CD8-positive, alpha-beta memory T cell (primary cell): ENCODE measurements at regions of chr2 and their contacts with region 1.

Region 1: GRCh38 chr2:186641807-186642321 is 52.0 kb upstream of the FAM171B start:
- DNase-seq: peak in 2 of 5 donors; percentile 17 to 30
- H3K4me3 ChIP-seq: no peak overlapping the region
- H3K4me3 Mint-ChIP-seq: no peak overlapping the region
- H3K27ac ChIP-seq: no peak overlapping the region
- H3K27ac Mint-ChIP-seq: no peak overlapping the region
- H3K4me1 ChIP-seq: no peaks in the 10 kb centered on the region
- H3K4me1 Mint-ChIP-seq: peaks cover 0 to 4% (median 0%) of the 10 kb centered on the region in 3 donors
- H3K27me3 ChIP-seq: no peaks in the 10 kb centered on the region
- H3K27me3 Mint-ChIP-seq: no peaks in the 10 kb centered on the region

Region 2: DNA sequence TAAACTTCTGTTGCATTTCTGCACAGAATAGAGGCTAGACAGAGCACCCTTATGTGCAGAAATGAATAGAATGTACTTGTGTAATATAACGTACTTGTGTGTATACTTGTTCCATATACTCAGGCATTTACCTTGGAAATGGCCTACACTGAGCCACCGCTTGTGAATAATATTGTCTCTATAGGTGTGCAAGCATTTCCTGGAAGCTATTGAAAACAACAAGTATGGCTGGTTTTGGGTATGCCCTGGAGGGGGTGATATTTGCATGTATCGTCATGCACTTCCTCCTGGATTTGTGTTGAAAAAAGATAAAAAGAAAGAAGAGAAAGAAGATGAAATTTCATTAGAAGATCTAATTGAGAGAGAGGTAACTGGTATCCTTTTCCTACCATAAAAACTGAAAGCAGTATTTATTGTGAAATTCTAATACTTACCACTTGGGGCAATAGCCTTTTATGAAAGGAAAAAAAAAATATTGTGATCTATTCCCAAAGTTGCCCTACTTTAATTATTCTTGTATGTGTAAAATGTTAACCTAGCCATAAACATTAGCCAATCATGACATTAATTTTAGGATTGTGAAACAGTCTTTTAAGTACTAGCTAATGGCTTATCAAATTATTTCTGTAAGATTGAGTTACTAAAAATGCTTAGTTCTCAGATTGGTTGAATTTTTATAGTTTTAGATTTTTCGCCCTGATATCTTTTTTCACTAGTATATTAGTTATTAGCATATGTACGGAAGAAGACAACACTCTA is 137.8 kb before region 1 on chr2:
- CTCF ChIA-PET with region 1: interaction called, 27 read pairs
- POLR2A ChIA-PET with region 1: no interaction called
- DNase-seq: peak in 2 of 5 donors; percentile 7 to 23
- H3K4me3 ChIP-seq: no peak overlapping the region
- H3K4me3 Mint-ChIP-seq: no peak overlapping the region
- H3K27ac ChIP-seq: no peak overlapping the region
- H3K27ac Mint-ChIP-seq: peak overlapping the region in 4 of 8 donors; percentile 7 to 88 (median 46)
- H3K4me1 ChIP-seq: no peaks in the 10 kb centered on the region
- H3K4me1 Mint-ChIP-seq: peaks cover 19 to 37% (median 21%) of the 10 kb centered on the region in 3 donors
- H3K27me3 ChIP-seq: no peaks in the 10 kb centered on the region
- H3K27me3 Mint-ChIP-seq: no peaks in the 10 kb centered on the region